ENCODE measurements at regions of chr19 and their contacts with region 1.

Region 1: DNA sequence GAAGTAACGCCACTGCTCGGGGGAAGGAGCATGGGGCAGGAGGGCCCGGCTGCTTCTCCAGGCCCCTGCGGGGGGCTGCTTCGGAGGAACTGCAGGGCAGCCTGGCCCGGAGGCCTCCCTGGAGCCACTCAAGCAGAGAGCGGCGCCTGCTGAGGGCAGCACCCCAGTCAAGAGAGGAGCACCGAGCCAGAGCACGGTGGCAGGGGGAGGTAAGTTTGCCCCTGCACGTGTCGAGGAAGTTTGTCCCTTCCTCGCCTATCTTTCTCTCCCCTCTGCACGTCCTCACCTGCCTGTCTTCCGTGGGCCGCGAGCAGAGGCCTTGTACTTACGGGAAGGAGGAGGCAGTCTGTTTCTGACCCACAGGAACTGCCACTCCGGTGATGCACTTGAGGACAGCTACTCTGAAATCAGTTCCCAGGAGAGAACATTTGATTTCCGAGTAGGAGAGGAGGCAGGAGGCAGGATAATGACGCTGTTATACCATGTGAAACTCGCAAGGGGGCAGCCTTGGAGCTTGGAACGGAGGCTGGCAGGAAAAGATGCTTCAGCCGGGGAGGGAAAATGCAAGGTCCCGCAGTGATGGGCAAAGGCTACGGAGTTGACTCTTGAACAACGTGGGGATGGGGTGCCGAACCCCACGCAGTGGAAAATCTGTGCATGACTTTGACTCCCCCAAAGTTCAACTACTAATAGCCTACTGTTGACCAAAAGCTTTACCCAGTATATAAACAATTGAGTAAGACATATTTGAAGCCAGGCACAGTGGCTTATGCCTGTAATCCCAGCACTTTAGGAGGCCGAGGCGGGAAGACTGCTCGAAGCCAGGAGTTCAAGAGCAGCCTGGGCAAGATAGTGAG is 5.0 kb downstream of the FFAR1 start:
- DNase-seq: peak; percentile 64 to 75
- H3K4me3 ChIP-seq: no peak overlapping the region
- H3K27ac ChIP-seq: no peak overlapping the region
- H3K4me1 ChIP-seq: peaks cover 0 to 7% of the 10 kb centered on the region in 2 donors
- H3K27me3 ChIP-seq: no peaks in the 10 kb centered on the region
- CTCF ChIP-seq: peak; percentile 54 to 92 (median 75)
- POLR2A ChIP-seq: no peak

Region 2: GRCh38 chr19:35468637-35469036 is 116.0 kb after region 1 on chr19:
- intact Hi-C with region 1: loop called (anchors 5 kb)
- DNase-seq: peak; percentile 66 to 69
- H3K4me3 ChIP-seq: no peak overlapping the region
- H3K27ac ChIP-seq: no peak overlapping the region
- H3K4me1 ChIP-seq: no peaks in the 10 kb centered on the region
- H3K27me3 ChIP-seq: no peaks in the 10 kb centered on the region
- CTCF ChIP-seq: peak in 5 of 6 experiments; percentile 47 to 78 (median 64)
- POLR2A ChIP-seq: no peak

Region 3: DNA sequence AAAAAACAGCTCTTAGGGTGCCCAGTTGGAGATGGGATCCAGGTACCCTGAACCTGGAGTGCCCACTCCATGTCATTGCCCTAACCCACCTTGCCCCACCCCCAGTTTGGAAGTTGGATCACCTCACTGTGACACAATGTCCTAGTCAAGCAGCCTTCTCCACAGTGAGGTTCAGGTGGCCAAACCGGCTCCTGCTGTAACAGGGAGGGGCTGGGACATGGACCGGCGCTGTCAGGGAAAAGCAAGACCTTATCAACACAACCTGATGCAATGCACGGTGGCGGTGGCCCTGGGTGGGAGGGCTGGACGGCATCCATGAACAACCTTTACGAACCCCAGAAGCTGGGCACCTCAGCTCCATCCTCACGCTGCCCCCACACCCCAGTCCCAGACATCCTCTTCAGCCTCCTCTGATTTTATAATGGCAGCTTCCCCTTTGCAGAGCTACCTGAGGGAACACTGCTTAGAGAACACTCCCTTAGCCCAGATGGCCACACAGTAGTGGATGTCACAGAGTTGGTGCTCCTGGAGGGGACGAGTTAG is 139.2 kb after region 1 on chr19:
- intact Hi-C with region 1: loop called (anchors 5 kb)
- DNase-seq: no peak
- H3K4me3 ChIP-seq: no peak overlapping the region
- H3K27ac ChIP-seq: no peak overlapping the region
- H3K4me1 ChIP-seq: peaks cover 0 to 9% of the 10 kb centered on the region in 2 donors
- H3K27me3 ChIP-seq: no peaks in the 10 kb centered on the region
- CTCF ChIP-seq: no peak
- POLR2A ChIP-seq: no peak

Region 4: GRCh38 chr19:35592226-35592625 is 239.6 kb after region 1 on chr19:
- intact Hi-C with region 1: no loop called
- DNase-seq: peak; percentile 64 to 66
- H3K4me3 ChIP-seq: no peak overlapping the region
- H3K27ac ChIP-seq: no peak overlapping the region
- H3K4me1 ChIP-seq: peaks cover 3 to 14% of the 10 kb centered on the region in 2 donors
- H3K27me3 ChIP-seq: no peaks in the 10 kb centered on the region
- CTCF ChIP-seq: peak; percentile 19 to 86 (median 74)
- POLR2A ChIP-seq: no peak

Region 5: GRCh38 chr19:35612559-35613321 is 260.1 kb after region 1 on chr19 and contains the start of gene HAUS5:
- intact Hi-C with region 1: loop called (anchors 10 kb)
- DNase-seq: peak; percentile 92
- H3K4me3 ChIP-seq: peak within 1 kb of the TSS; percentile 5 to 55 (median 44)
- H3K27ac ChIP-seq: peak within 1 kb of the TSS in 2 of 3 donors; percentile 3 to 51
- H3K4me1 ChIP-seq: peaks cover 9 to 10% of the 10 kb centered on the region in 2 donors
- H3K27me3 ChIP-seq: no peaks in the 10 kb centered on the region
- CTCF ChIP-seq: peak in 1 of 6 experiments; percentile 56
- POLR2A ChIP-seq: peak in 1 of 2 donors; percentile 45
- total RNA-seq, gene HAUS5: 7.9 to 17.8 (median 10.2) TPM